ENCODE measurements at regions of chr7 and their contacts with region 1.

Region 1: DNA sequence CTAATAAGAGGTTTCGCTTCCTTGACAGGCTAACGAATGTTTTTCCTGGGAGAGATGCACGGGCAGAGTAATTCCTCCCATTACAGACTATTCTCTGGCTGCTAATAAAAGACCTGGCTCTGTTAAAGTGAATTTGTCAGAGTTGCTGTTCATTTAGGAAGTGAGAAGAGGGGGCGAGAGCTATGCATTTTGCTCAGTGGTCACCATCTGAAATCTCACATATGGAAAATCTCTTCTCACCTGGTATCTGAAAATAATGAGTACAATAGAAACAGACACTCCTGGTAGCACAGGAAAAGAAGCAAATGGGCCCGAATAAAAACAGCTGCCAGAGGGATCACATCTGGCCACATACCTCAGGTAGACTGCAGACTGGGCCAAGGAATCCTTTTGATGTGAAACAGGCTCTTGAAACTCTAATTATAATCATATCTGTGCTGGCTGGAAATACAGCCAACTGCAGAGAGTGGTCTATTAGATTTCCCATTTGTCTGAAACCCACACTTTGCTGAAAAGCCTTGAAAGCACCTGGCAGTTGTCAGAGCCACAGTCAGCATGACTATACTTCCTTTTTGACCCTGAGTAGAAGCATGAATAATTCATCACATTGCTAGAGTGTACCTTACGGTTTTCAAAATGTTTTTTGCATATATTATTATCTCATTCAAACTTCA is 33.6 kb downstream of the AOAH start:
- DNase-seq: no peak
- H3K4me3 Mint-ChIP-seq: no peak overlapping the region
- H3K27ac Mint-ChIP-seq: no peak overlapping the region
- H3K4me1 Mint-ChIP-seq: peaks cover 44% of the 10 kb centered on the region
- H3K27me3 Mint-ChIP-seq: no peaks in the 10 kb centered on the region

Region 2: GRCh38 chr7:36707465-36707864 is 16.8 kb after region 1 on chr7:
- CTCF ChIA-PET with region 1: no interaction called
- intact Hi-C with region 1: loop called (anchors 2 kb)
- DNase-seq: no peak
- H3K4me3 Mint-ChIP-seq: no peak overlapping the region
- H3K27ac Mint-ChIP-seq: peak overlapping the region; percentile 47
- H3K4me1 Mint-ChIP-seq: peaks cover 28% of the 10 kb centered on the region
- H3K27me3 Mint-ChIP-seq: no peaks in the 10 kb centered on the region

Measured in activated naive CD4-positive, alpha-beta T cell treated with anti-CD3 and anti-CD28 coated beads for 36 hours (primary cell).